ENCODE measurements at regions of chr9 and their contacts with region 1.

Region 1: GRCh38 chr9:125631391-125632085 is 75.5 kb downstream of the MAPKAP1 start:
- DNase-seq: peak; percentile 31 to 62 (median 44)
- ATAC-seq: peak; percentile 92
- H3K4me3 ChIP-seq: no peak overlapping the region
- H3K27ac ChIP-seq: no peak overlapping the region
- H3K4me1 ChIP-seq: peaks cover 9 to 10% of the 10 kb centered on the region in 2 experiments
- H3K27me3 ChIP-seq: no peaks in the 10 kb centered on the region
- CTCF ChIP-seq: peak; percentile 66 to 83 (median 70)
- EP300 ChIP-seq: no peak
- POLR2A ChIP-seq: no peak
- RAD21 ChIP-seq: peak; percentile 56 to 89

Region 2: GRCh38 chr9:125407974-125408900 is 223.3 kb before region 1 on chr9:
- CTCF ChIA-PET with region 1: interaction called, 10 read pairs
- POLR2A ChIA-PET with region 1: no interaction called
- in situ Hi-C with region 1: no loop called
- intact Hi-C with region 1: no loop called
- DNase-seq: peak; percentile 88 to 92 (median 89)
- ATAC-seq: peak; percentile 87
- H3K4me3 ChIP-seq: peak overlapping the region; percentile 52
- H3K27ac ChIP-seq: peak overlapping the region; percentile 25; the same call in 1 of the 3 replicates
- H3K4me1 ChIP-seq: peaks cover 9 to 56% of the 10 kb centered on the region in 2 experiments; a peak in 4 of 5 replicates
- H3K27me3 ChIP-seq: no peaks in the 10 kb centered on the region; a peak in 1 of 5 replicates
- CTCF ChIP-seq: peak; percentile 87 to 97 (median 93)
- EP300 ChIP-seq: no peak
- POLR2A ChIP-seq: no peak
- RAD21 ChIP-seq: peak; percentile 84 to 91

Region 3: DNA sequence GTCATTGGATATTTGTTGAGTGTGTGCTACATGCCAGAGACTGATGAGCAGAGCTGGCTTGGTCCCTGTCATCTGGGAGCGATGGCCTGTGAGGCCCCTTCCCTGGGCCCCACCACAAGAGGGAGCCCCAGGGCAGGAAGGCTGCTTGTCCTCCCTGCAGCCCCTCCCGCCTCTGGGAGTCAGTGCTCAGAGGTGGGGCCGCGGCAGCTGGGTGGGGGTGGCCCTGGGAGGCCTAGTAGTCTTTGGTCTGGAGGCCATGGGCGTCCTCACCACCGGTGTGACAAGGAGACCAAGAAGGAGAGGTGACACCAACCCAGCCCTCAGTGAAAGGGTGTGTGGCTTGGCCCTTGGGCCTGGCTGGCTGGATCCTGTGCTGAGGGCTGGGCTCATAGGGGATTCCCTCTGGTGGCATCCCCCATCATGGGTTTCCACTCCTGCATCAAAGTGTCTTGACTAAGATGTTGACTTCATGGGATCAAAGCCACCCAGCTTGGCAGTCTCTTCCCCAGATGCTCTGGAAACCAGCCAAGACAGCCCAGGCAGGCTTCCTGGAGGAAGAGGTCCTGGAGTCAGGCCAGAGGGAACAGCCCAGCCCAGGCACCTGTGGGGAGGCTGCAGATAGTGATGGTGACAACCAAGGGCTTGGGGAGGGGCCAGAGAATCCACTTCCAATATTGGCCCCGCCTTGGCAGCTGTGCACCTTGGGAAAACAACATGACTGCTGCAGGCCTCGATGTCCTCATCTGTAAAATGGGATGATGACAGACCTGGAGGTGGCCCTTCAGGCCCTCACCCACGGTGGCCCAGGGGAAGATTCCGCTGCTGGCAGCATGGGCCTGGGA is 203.3 kb before region 1 on chr9:
- CTCF ChIA-PET with region 1: interaction called, 8 read pairs
- POLR2A ChIA-PET with region 1: no interaction called
- in situ Hi-C with region 1: loop called (anchors 10 kb)
- intact Hi-C with region 1: loop called (anchors 1 kb)
- DNase-seq: peak; percentile 85 to 92 (median 89)
- ATAC-seq: peak; percentile 96
- H3K4me3 ChIP-seq: no peak overlapping the region
- H3K27ac ChIP-seq: no peak overlapping the region
- H3K4me1 ChIP-seq: peaks cover 6 to 55% of the 10 kb centered on the region in 2 experiments; a peak in 3 of 5 replicates
- H3K27me3 ChIP-seq: no peaks in the 10 kb centered on the region
- CTCF ChIP-seq: peak; percentile 87 to 92 (median 91)
- EP300 ChIP-seq: no peak
- POLR2A ChIP-seq: 0 out of 2 replicates have a peak, but pooled peaks have one; percentile 17
- RAD21 ChIP-seq: peak; percentile 81 to 95

Region 4: DNA sequence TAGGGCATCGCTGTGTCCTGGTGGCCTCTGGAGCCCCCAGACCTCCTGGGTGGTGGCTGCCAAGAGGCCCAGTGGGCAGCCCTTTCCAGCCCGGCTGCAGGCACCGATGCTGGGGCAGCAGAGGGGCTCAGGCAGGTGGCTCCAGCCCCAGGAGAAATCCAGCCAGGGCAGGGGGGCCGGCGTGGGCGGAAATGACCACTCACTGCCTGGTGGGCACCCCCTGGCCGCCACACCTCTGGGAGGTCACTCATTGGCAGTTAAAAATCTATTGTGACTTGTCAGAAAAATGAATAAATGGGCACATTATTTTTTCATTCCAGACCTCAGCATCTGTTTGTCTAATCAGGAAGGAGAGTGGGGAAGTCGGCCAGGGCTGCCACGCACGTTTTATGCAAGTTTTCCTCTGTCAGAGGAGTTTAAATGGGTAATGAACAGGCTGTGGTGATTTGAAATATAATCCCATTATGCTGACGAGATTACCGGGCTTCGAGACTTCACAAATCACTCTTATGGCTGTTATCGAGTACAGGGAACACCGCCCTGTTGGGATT is 198.0 kb before region 1 on chr9:
- CTCF ChIA-PET with region 1: interaction called, 8 read pairs
- POLR2A ChIA-PET with region 1: no interaction called
- in situ Hi-C with region 1: loop called (anchors 10 kb)
- intact Hi-C with region 1: loop called (anchors 1 kb)
- DNase-seq: no peak
- ATAC-seq: no peak
- H3K4me3 ChIP-seq: no peak overlapping the region
- H3K27ac ChIP-seq: no peak overlapping the region
- H3K4me1 ChIP-seq: peaks cover 3 to 54% of the 10 kb centered on the region in 2 experiments; a peak in 3 of 5 replicates
- H3K27me3 ChIP-seq: no peaks in the 10 kb centered on the region
- CTCF ChIP-seq: no peak
- EP300 ChIP-seq: no peak
- POLR2A ChIP-seq: no peak
- RAD21 ChIP-seq: no peak

Region 5: DNA sequence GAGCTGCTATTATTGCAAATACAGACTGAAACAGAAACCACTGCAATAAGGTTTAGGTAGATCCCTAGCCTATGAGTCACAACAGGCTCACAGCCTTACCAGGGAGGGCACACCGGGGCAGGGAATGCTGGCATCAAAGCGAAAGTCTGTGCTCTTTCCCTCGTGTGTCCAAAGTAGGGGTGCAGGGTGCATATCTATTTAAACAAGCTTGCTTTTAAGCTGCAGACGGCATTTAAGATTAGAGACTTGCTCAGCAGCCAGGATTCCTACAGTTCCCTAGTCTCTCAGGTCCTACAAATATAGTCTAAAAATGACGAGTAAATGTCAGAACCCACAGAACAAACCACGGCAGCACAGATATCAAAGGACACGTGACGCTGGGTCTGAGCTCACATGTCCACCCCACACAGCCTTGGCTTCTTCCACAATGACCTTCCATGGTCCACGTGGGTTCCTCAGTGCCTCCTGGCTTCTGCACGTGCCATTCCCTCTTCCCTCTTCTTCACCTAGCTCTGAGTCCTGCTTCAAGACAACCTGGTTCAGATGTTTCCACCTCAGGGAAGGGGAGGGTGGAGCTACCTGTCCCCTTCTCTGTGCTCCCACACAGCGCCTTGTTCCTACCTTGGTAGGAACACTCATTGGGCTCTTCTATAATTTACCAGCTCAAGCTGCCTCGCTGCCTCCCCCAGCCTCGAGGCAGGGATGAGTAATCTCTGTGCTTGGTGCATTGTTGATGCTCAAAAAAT is 117.7 kb before region 1 on chr9:
- CTCF ChIA-PET with region 1: no interaction called
- POLR2A ChIA-PET with region 1: no interaction called
- in situ Hi-C with region 1: no loop called
- intact Hi-C with region 1: no loop called
- DNase-seq: peak in 2 of 4 experiments; percentile 30 to 36
- ATAC-seq: peak; percentile 63
- H3K4me3 ChIP-seq: no peak overlapping the region
- H3K27ac ChIP-seq: no peak overlapping the region; the same call in 2 of the 3 replicates
- H3K4me1 ChIP-seq: peaks cover 0 to 11% of the 10 kb centered on the region in 2 experiments; a peak in 4 of 5 replicates
- H3K27me3 ChIP-seq: no peaks in the 10 kb centered on the region
- CTCF ChIP-seq: no peak
- EP300 ChIP-seq: no peak
- POLR2A ChIP-seq: no peak
- RAD21 ChIP-seq: no peak

Region 6: DNA sequence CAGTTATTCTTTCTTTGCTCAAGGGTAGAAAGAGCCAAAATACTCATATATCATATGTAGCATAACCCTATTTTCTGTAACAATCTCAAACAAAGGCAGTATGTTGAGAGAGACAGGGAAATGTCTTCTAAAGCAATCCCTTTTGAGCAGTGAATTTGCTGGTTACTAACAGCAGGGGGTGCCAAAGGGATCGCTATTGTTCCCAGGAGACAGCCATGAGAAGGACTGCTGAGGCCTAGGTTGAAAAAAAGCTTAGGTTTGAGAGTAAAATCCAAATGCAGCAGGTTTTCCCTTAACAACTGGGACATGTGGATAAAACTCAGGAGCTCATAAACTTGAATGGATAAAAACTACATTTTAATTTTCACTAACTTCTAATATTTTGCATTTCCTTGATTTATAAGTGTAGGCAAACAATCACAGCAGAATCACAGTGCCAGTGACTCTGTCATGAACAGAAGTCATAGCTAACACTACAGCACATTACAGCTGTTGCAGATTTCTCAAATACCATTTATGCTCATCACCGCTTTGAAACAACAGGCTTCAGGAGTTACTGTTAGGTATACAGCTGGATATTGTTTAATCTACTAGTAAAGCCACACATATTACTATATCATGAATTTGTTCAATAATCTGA is 73.0 kb before region 1 on chr9:
- CTCF ChIA-PET with region 1: no interaction called
- POLR2A ChIA-PET with region 1: no interaction called
- in situ Hi-C with region 1: no loop called
- intact Hi-C with region 1: loop called (anchors 1 kb)
- DNase-seq: peak; percentile 68 to 72 (median 71)
- ATAC-seq: peak; percentile 87
- H3K4me3 ChIP-seq: no peak overlapping the region
- H3K27ac ChIP-seq: no peak overlapping the region
- H3K4me1 ChIP-seq: no peaks in the 10 kb centered on the region; a peak in 1 of 5 replicates
- H3K27me3 ChIP-seq: no peaks in the 10 kb centered on the region
- CTCF ChIP-seq: peak; percentile 64 to 79 (median 72)
- EP300 ChIP-seq: no peak
- POLR2A ChIP-seq: no peak
- RAD21 ChIP-seq: peak; percentile 65 to 81

Region 7: DNA sequence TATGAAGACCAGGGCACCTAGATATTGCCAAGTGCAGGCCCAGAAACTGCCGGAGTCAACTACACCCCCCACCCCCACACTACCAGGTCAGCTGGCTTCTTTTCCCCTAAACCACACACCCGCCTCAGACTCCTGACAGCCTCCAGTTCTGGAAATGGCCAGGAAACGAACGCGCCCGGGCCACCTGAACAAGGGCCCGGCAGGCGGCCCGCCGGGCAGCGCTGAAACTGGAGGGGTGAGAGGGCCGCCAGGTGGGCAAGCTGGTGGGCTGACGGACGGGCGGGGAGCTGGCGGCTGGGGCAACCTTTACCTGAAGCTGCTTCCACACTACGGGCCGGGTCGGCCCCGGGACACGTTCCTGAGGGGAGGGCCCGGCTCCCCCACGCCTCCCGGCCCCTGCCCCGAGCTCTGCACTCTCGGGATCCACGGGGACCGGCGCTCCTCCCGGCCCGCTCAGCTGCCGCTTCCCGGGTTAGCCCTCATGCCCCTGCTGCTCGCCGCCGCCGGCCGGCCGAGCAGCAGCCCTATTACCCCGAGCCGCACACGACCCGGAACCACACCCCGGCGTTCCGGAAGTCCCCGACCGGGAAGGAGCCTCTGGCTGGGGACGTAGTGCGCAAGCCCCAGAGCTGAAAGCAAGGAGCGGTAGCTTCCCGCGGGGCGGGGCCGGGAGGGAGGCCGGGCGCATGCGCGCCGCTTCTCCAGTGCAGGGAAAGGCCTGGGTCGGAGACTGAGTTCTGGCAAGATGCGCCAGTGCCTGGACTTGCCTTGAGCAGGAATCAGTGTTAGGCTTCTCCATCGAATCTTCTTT is 75.3 kb after region 1 on chr9 and contains the start of gene MAPKAP1:
- CTCF ChIA-PET with region 1: no interaction called
- POLR2A ChIA-PET with region 1: no interaction called
- in situ Hi-C with region 1: no loop called
- intact Hi-C with region 1: loop called (anchors 5 kb)
- DNase-seq: peak; percentile 96 to 97 (median 97)
- ATAC-seq: peak; percentile 100
- H3K4me3 ChIP-seq: peak within 1 kb of the TSS; percentile 99
- H3K27ac ChIP-seq: peak within 1 kb of the TSS; percentile 80
- H3K4me1 ChIP-seq: peaks cover 5 to 13% of the 10 kb centered on the region in 2 experiments; a peak in 4 of 5 replicates
- H3K27me3 ChIP-seq: peaks cover 0 to 4% of the 10 kb centered on the region in 2 experiments; a peak in 3 of 5 replicates
- CTCF ChIP-seq: 0 out of 6 replicates have a peak, but pooled peaks of 1 of the 3 experiments have one; percentile 0
- EP300 ChIP-seq: 0 out of 2 replicates have a peak, but pooled peaks have one; percentile 19
- POLR2A ChIP-seq: peak; percentile 94
- RAD21 ChIP-seq: no peak
- polyA plus RNA-seq, gene MAPKAP1: 2.6 to 3.3 TPM